PC-3 (cell line): ENCODE measurements at regions of chr6 and their contacts with region 1.

Region 1: DNA sequence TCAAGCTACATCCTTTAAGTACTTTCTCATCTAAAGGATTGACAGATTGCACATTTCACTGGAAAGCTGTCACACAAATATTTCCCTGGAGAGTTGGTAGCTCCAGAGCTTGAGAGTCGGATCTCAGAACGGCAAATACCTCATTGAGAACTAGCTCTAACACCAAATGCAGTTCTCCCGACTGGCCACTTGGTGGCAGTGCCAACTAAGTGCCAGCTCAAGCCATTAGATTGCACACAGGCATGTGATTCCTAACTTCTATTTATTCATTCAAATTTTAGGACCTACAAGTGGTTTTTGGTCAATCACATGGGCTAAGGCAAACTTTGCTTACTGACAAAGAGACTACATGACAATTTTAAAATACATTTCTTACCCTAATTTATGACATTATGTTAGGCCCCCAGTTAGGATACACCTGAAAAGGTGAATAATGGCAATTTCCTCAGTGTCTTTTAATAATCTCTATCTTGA is 7.9 kb upstream of the MCHR2 start:
- DNase-seq: peak; percentile 61
- ATAC-seq: peak; percentile 77
- H3K4me3 ChIP-seq: no peak overlapping the region
- H3K27ac ChIP-seq: no peak overlapping the region
- H3K4me1 ChIP-seq: no peaks in the 10 kb centered on the region
- H3K27me3 ChIP-seq: peaks cover 30% of the 10 kb centered on the region
- CTCF ChIP-seq: peak; percentile 84

Region 2: GRCh38 chr6:99868074-99868702 is 133.8 kb before region 1 on chr6:
- CTCF ChIA-PET with region 1: no interaction called
- POLR2A ChIA-PET with region 1: no interaction called
- intact Hi-C with region 1: loop called (anchors 2 kb)
- DNase-seq: peak; percentile 78
- ATAC-seq: peak; percentile 76
- H3K4me3 ChIP-seq: no peak overlapping the region
- H3K27ac ChIP-seq: no peak overlapping the region
- H3K4me1 ChIP-seq: no peaks in the 10 kb centered on the region
- H3K27me3 ChIP-seq: peaks cover 42% of the 10 kb centered on the region
- CTCF ChIP-seq: peak; percentile 77

Region 3: GRCh38 chr6:100078509-100078908 is 76.6 kb after region 1 on chr6:
- CTCF ChIA-PET with region 1: interaction called, 5 read pairs
- POLR2A ChIA-PET with region 1: no interaction called
- intact Hi-C with region 1: loop called (anchors 5 kb)
- DNase-seq: peak; percentile 71
- ATAC-seq: peak; percentile 96
- H3K4me3 ChIP-seq: no peak overlapping the region
- H3K27ac ChIP-seq: no peak overlapping the region
- H3K4me1 ChIP-seq: no peaks in the 10 kb centered on the region
- H3K27me3 ChIP-seq: peaks cover 13% of the 10 kb centered on the region; the same call in 1 of the 2 replicates
- CTCF ChIP-seq: peak; percentile 79

Region 4: DNA sequence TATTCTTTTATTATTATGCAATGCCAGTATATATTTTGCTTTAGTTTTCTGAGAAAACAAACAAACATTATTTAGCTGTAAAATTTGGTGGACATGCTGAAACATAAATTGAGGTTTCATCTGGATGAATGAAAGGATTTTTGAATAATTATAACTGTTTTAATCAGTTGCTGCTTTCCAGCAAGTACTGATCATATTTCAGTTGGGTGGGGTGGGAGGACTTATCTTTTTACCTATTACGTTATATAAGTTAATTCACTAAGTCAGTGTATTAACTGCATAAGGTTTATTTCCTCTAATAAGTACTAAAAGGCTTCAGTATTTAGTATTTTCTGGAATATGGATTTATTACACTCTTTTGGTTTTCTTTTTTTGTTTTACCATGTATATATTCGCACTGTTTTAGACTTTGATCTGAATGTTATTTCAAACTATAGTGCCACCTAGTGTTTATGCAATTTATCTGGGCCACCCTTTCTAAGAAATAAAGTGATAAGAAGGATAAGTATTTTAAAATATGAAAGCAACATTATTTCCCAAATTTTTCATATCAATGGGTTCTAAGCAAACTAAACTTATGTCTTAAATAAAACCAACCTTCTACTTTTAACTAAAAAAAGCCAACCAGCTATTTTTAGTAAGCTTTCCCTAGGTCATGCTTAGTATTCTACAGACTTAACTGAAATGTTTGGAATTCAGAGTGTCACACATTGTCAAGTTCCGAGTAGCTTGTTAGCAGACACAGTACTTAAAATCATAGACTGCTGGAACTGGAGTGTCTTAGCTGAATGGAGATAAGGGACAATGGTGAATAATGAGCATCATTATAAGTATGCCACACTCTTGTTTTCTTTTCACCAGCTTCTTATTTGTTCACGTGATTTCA is 97.5 kb after region 1 on chr6:
- CTCF ChIA-PET with region 1: interaction called, 13 read pairs
- POLR2A ChIA-PET with region 1: interaction called, 4 read pairs
- intact Hi-C with region 1: loop called (anchors 1 kb)
- DNase-seq: peak; percentile 59
- ATAC-seq: peak; percentile 45; the same call in 1 of the 2 replicates
- H3K4me3 ChIP-seq: no peak overlapping the region
- H3K27ac ChIP-seq: no peak overlapping the region
- H3K4me1 ChIP-seq: peaks cover 18% of the 10 kb centered on the region
- H3K27me3 ChIP-seq: no peaks in the 10 kb centered on the region
- CTCF ChIP-seq: peak; percentile 73

Region 5: GRCh38 chr6:100335991-100336390 is 334.0 kb after region 1 on chr6:
- CTCF ChIA-PET with region 1: no interaction called
- POLR2A ChIA-PET with region 1: no interaction called
- intact Hi-C with region 1: loop called (anchors 10 kb)
- DNase-seq: no peak
- ATAC-seq: no peak
- H3K4me3 ChIP-seq: no peak overlapping the region
- H3K27ac ChIP-seq: no peak overlapping the region
- H3K4me1 ChIP-seq: peaks cover 3% of the 10 kb centered on the region; the same call in 1 of the 2 replicates
- H3K27me3 ChIP-seq: no peaks in the 10 kb centered on the region
- CTCF ChIP-seq: no peak

Region 6: DNA sequence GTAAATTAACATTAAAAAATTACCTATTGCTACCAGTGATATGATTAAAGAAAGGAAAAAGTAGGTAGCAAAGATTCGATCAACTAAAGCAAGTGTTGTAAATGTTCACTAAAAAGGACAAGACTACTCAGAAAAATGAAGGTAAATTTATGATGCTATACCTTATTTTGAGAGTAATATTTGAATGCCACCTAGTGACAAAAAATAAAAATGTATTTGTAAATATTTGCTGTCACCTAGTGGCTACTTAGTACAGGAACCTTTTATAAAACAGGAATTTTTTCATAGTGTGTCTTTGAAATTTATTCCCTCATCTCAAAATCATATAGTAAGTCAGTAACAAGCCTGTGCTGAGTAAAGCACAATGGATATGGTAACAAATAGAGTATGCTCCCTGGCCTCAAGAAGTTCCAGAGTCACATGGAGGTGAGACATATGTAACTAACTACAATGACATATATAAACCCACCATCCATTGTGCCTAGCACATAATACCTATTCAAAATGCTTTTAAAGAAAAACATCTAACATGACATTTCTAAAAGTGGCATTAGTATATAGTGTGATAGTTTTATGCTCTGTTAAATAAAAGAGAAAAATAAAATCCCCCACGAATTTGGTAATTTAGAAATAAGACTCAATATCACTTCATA is 655.9 kb after region 1 on chr6:
- CTCF ChIA-PET with region 1: interaction called, 3 read pairs
- POLR2A ChIA-PET with region 1: no interaction called
- intact Hi-C with region 1: loop called (anchors 1 kb)
- DNase-seq: peak; percentile 61
- ATAC-seq: no peak; the same call in 1 of the 2 replicates
- H3K4me3 ChIP-seq: no peak overlapping the region
- H3K27ac ChIP-seq: no peak overlapping the region
- H3K4me1 ChIP-seq: peaks cover 2% of the 10 kb centered on the region
- H3K27me3 ChIP-seq: no peaks in the 10 kb centered on the region
- CTCF ChIP-seq: peak; percentile 87